GM13976 (cell line): ENCODE measurements at regions of chr1 and their contacts with region 1.

Region 1: DNA sequence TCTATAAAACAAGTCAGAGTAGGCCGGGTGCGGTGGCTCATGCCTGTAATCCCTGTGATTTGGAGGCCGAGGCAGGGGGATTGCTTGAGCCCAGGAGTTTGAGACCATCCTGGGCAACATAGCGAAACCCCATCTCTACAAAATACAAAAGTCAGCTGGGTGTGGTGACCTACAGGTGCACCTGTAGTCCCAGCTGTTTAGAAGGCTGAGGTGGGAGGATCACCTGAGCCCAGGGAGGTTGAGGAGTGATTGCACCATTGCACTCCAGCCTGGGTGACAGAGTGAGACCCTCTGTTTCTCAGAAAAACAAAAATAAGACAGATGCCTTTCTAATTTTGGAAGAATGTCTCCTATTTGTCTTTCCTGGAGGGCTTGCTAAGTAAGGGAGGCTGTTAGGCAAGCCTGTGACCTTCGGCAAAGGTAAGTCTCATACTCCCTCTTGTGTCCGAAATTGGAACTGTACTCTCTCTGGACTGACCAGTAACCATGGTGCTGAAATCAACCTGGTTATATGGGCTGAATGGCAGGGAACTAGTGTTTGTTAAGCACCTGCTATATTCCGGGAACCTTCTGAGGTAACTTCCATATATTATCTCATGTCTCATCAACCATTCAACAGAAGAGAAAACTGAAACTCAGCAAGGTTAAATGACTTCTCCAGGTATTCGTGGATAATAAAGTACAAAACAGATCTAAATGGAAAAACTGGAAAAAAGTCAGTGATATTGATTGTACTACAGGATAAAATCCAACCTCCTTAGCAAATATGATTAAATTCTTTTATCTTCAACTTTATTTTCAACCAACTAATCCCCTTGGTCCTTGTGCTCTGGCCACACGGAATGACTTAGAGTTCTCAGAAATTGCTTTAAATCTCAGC is 11.8 kb upstream of the RAB3B start:
- DNase-seq: peak; percentile 87
- CTCF ChIP-seq: peak; percentile 75

Region 2: DNA sequence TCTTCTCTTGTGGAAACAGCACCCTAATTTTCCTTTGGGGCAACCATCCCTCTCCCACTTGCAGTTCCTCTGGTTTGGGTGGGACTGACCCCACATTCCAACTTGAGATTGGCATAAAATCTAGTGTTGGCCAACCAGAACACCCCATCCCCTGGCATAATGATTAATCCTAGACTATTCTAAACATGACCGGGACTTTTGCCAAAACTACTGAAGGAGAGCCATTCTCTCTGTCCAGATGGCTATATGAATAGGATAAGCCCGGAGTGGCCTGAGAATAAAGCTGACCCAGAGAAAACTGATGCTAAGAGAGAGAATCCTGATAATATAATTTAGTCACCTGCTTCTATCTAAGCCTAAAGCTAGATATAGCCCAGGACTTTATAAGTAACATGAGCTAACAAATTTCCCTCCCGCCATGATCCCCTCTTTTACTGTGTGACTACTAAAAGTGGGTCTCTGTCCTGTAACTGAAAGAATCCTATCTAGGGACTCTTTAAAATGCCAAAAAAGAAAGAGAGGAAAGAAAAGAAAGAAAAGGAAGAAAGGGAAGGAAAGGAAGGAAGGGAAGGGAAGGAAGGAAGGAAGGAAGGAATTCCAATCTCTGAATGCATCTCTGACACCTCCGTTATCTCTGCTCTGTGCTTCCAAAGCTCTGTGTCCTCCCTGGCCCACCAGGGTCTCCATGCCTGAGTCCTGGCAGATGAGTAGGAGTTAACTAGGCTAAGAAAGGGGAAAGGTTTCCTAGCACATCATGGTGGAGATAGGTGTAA is 95.8 kb before region 1 on chr1:
- in situ Hi-C with region 1: loop called (anchors 10 kb)
- DNase-seq: no peak
- CTCF ChIP-seq: no peak